ENCODE measurements at regions of chr6 and their contacts with region 1.

Region 1: DNA sequence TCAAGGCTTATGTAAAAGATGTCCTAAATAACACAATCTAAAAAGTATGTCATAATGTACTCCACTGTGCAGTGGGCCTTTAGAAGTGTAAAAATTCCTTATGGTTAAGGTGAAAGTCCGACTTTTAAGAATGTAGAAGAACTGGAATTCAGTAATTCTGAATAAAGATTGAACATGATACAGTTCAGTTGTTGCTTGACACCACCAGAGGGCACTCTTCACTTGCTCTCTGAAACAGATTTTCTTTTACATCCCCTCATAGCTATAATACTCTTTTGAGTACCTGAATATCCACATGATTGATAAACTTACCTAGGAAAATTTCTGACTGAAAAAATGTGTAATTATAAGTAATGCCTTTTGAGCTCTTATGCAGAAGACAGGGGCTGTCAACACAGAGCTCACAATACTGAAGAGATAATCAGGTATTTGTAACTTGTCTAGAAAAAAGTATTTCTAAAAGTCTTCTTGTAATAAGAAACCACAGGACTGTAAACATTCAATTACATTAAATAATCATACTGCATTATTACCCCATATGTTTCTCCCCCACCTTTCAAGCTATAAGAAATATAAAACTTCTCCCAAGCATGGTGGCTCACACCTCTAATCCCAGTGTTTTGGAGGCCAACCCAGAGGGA is 92.1 kb downstream of the POPDC3 start:
- DNase-seq: peak; percentile 42
- H3K4me3 ChIP-seq: no peak overlapping the region
- H3K27ac ChIP-seq: no peak overlapping the region
- H3K27me3 ChIP-seq: peaks cover 3% of the 10 kb centered on the region
- CTCF ChIP-seq: peak; percentile 84

Region 2: DNA sequence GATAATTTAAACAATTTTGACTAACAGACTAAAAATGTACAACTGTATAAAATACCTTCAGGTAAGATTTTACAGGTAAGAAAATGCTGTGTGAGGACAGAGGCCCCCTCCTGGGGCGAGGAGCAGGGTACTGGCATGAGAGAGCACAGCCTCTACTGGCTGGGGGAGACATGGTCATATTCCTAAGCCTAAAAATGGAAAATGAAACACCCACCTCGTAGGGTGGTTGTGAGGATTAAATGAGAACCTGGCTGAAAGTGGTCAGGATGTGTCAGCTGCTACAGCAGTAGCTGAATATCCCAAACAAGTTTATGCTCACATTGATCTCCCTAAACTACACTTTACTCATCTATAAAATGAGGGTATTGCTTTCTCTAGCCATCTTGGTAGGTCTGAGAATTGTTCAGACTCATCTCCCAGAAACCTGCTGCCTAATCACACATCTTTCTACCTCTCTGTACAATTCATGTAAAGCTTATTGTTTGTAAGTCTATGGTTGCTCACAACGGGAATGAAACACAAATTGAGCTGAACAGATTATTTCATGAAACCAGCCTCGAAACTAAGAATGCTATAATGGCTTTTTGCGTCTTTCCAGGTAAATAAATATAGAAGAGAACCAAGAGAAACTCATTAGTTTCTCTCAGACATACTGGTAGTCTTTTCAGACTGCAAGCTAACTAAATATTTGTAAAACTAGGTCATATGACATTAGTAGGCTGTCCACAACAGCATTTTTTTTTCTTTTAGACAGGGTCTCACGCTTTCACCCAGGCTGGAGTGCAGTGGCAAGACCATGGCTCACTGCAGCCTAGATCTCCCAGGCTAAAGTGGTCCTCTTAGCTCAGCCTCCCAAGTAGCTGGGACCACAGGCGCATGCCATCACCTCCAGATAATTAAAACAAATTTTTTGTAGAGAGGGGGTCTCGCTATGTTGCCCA is 22.5 kb after region 1 on chr6:
- CTCF ChIA-PET with region 1: interaction called, 23 read pairs
- POLR2A ChIA-PET with region 1: no interaction called
- DNase-seq: no peak
- H3K4me3 ChIP-seq: no peak overlapping the region
- H3K27ac ChIP-seq: no peak overlapping the region
- H3K27me3 ChIP-seq: no peaks in the 10 kb centered on the region
- CTCF ChIP-seq: no peak

Region 3: GRCh38 chr6:105357165-105357564 is 269.5 kb after region 1 on chr6:
- CTCF ChIA-PET with region 1: interaction called, 239 read pairs
- POLR2A ChIA-PET with region 1: interaction called, 4 read pairs
- DNase-seq: no peak
- H3K4me3 ChIP-seq: no peak overlapping the region
- H3K27ac ChIP-seq: no peak overlapping the region
- H3K27me3 ChIP-seq: no peaks in the 10 kb centered on the region
- CTCF ChIP-seq: no peak

Region 4: DNA sequence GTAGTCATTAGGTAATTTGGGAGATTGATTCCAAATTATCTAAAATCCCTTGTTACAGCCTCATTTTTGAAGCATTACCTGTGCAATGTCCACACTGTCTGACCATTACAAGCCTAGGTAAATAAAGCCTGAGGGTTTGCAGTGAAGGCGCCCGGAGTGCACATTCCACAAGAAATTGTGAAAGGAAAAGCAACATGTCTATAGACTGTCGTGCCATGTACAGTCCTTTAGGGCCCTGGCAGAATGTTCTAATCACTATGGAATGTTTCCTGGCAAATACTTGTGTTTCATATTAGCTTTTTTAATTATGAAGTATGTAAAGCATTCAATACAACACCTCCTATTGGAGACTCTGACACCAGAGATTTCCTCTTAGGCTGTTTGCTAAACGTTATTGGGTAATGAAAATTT is 286.3 kb after region 1 on chr6:
- CTCF ChIA-PET with region 1: interaction called, 239 read pairs
- POLR2A ChIA-PET with region 1: no interaction called
- DNase-seq: no peak
- H3K4me3 ChIP-seq: no peak overlapping the region
- H3K27ac ChIP-seq: no peak overlapping the region
- H3K27me3 ChIP-seq: no peaks in the 10 kb centered on the region
- CTCF ChIP-seq: no peak

Region 5: GRCh38 chr6:105402939-105403935 is 315.5 kb after region 1 on chr6 and contains the start of gene PREP:
- CTCF ChIA-PET with region 1: interaction called, 39 read pairs
- POLR2A ChIA-PET with region 1: no interaction called
- DNase-seq: peak; percentile 44
- H3K4me3 ChIP-seq: peak within 1 kb of the TSS; percentile 95
- H3K27ac ChIP-seq: peak within 1 kb of the TSS; percentile 80
- H3K27me3 ChIP-seq: no peaks in the 10 kb centered on the region
- CTCF ChIP-seq: peak; percentile 92
- polyA plus RNA-seq, gene PREP: 16.4 and 21.2 TPM in 2 replicates

Region 6: DNA sequence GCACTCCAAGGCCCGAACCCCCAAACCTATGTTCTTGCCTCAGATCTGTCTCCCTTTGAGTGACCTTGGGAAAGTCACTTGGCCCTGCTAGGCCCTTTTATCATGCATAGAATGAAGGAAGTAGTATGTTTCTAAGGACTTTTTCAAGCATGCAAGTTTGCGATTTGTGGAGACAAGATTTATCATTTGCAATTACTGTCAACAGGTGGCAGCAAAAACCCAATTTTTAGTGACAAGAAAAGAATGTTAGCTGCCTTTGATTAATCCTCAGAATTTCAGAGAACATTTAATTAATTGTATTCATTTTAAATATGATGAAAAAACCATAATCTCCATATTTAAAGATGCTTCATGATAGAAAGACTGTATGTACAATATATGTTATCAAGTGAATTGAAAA is 343.5 kb after region 1 on chr6:
- CTCF ChIA-PET with region 1: interaction called, 27 read pairs
- POLR2A ChIA-PET with region 1: no interaction called
- DNase-seq: peak; percentile 15
- H3K4me3 ChIP-seq: no peak overlapping the region
- H3K27ac ChIP-seq: no peak overlapping the region
- H3K27me3 ChIP-seq: no peaks in the 10 kb centered on the region
- CTCF ChIP-seq: peak; percentile 58